PC-9 (cell line): ENCODE measurements at regions of chr4 and their contacts with region 1.

Region 1: GRCh38 chr4:118888666-118889311 is at the start of gene SYNPO2:
- DNase-seq: peak in 1 of 2 experiments; percentile 36
- H3K4me3 ChIP-seq: no peak within 1 kb of the TSS
- H3K27ac ChIP-seq: no peak within 1 kb of the TSS
- H3K4me1 ChIP-seq: no peaks in the 10 kb centered on the region
- H3K27me3 ChIP-seq: no peaks in the 10 kb centered on the region
- CTCF ChIP-seq: no peak
- total RNA-seq, gene SYNPO2: 0.53 and 0.87 TPM in 2 replicates

Region 2: DNA sequence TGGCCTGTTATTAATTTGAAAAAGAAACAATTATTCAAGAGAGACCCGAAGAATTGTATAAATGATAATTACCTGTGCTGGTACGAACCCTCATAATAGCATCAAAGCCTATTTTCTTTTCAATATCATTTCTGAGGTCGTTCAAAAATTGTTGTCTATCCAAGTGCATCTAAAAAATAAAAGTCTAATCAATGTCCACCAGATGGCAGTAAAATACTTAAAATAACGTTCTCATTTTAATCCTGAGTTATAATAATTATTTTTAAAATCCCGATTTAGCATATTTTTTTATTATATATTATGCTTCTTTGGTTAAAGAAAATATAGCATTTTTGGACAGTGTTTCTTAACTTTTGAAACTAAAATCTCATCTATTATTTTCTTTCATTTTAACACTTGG is 147.9 kb before region 1 on chr4:
- CTCF ChIA-PET with region 1: no interaction called
- POLR2A ChIA-PET with region 1: no interaction called
- intact Hi-C with region 1: loop called (anchors 1 kb)
- DNase-seq: no peak
- H3K4me3 ChIP-seq: no peak overlapping the region
- H3K27ac ChIP-seq: no peak overlapping the region
- H3K4me1 ChIP-seq: no peaks in the 10 kb centered on the region
- H3K27me3 ChIP-seq: no peaks in the 10 kb centered on the region
- CTCF ChIP-seq: peak; percentile 63

Region 3: GRCh38 chr4:118772081-118772766 is 116.6 kb before region 1 on chr4:
- CTCF ChIA-PET with region 1: no interaction called
- POLR2A ChIA-PET with region 1: no interaction called
- intact Hi-C with region 1: loop called (anchors 2 kb)
- DNase-seq: no peak
- H3K4me3 ChIP-seq: no peak overlapping the region
- H3K27ac ChIP-seq: no peak overlapping the region
- H3K4me1 ChIP-seq: peaks cover 9% of the 10 kb centered on the region; the same call in 1 of the 2 replicates
- H3K27me3 ChIP-seq: no peaks in the 10 kb centered on the region
- CTCF ChIP-seq: peak; percentile 63